CD14-positive monocyte (primary cell): ENCODE measurements at regions of chr17 and their contacts with region 1.

Region 1: DNA sequence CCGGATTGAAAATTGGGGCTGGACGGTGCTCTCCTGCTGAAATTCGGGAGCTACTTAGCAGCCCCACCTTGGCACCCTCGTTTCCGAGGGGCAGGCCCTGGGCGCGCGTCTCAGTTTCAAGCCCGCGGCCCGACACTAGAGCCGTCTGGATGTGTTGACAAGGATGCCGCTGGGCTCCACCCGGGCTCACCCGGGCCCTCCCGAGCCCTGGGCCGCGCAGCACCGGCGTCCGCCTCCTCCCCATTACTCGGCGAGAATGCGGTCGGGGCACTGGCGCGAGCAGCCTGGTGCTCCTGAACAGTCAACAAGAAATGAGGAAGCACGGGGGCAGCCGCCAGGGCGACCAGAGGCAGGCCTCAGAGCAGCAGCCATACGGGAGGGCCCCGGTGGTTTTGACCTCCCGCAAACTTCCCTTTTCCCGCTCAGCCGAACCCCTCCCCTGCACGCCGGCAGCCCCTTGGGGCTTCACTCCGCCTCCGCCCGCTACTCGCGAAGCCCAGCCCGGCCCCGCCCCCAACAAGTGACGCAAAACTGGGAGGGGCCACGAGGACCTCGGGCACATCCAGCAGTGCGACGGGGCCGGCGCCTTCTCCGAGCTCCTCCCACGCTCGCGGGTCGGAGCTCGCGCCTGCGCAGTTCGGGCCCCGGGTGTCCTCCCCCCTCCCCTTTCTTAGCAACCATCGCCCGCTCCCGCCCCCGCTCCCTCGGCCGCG is 447 bp upstream of the SEC14L1 start:
- DNase-seq: peak; percentile 99 to 100 (median 100)
- H3K4me3 ChIP-seq: peak overlapping the region; percentile 26 to 64 (median 26)
- H3K4me3 Mint-ChIP-seq: peak overlapping the region; percentile 56 to 59
- H3K27ac ChIP-seq: peak overlapping the region; percentile 96 to 97
- H3K27ac Mint-ChIP-seq: peak overlapping the region; percentile 90 to 97 (median 95)
- H3K4me1 ChIP-seq: peaks cover 45 to 59% of the 10 kb centered on the region in 2 donors
- H3K4me1 Mint-ChIP-seq: peaks cover 45% of the 10 kb centered on the region
- H3K27me3 ChIP-seq: no peaks in the 10 kb centered on the region
- H3K27me3 Mint-ChIP-seq: peaks cover 0 to 3% (median 1%) of the 10 kb centered on the region in 3 donors
- CTCF ChIP-seq: no peak

Region 2: GRCh38 chr17:77076124-77076872 is 64.0 kb before region 1 on chr17:
- intact Hi-C with region 1: no loop called
- DNase-seq: no peak
- H3K4me3 ChIP-seq: no peak overlapping the region
- H3K4me3 Mint-ChIP-seq: no peak overlapping the region
- H3K27ac ChIP-seq: no peak overlapping the region
- H3K27ac Mint-ChIP-seq: no peak overlapping the region
- H3K4me1 ChIP-seq: no peaks in the 10 kb centered on the region
- H3K4me1 Mint-ChIP-seq: no peaks in the 10 kb centered on the region
- H3K27me3 ChIP-seq: no peaks in the 10 kb centered on the region
- H3K27me3 Mint-ChIP-seq: peaks cover 7 to 15% (median 9%) of the 10 kb centered on the region in 3 donors
- CTCF ChIP-seq: no peak

Region 3: GRCh38 chr17:77096570-77097214 is 43.6 kb before region 1 on chr17:
- intact Hi-C with region 1: loop called (anchors 2 to 5 kb)
- DNase-seq: peak in 2 of 3 donors; percentile 42 to 47
- H3K4me3 ChIP-seq: no peak overlapping the region
- H3K4me3 Mint-ChIP-seq: no peak overlapping the region
- H3K27ac ChIP-seq: peak overlapping the region in 1 of 2 donors; percentile 2
- H3K27ac Mint-ChIP-seq: peak overlapping the region; percentile 48 to 99 (median 74)
- H3K4me1 ChIP-seq: peaks cover 44 to 45% of the 10 kb centered on the region in 2 donors
- H3K4me1 Mint-ChIP-seq: peaks cover 41% of the 10 kb centered on the region
- H3K27me3 ChIP-seq: no peaks in the 10 kb centered on the region
- H3K27me3 Mint-ChIP-seq: no peaks in the 10 kb centered on the region
- CTCF ChIP-seq: peak; percentile 83

Region 4: GRCh38 chr17:77233635-77234334 is 93.5 kb after region 1 on chr17:
- intact Hi-C with region 1: loop called in 1 of 2 experiments (anchors 5 kb)
- DNase-seq: peak; percentile 29 to 76 (median 37)
- H3K4me3 ChIP-seq: no peak overlapping the region
- H3K4me3 Mint-ChIP-seq: no peak overlapping the region
- H3K27ac ChIP-seq: no peak overlapping the region
- H3K27ac Mint-ChIP-seq: peak overlapping the region in 3 of 7 donors; percentile 27 to 68 (median 41)
- H3K4me1 ChIP-seq: peaks cover 10 to 21% of the 10 kb centered on the region in 2 donors
- H3K4me1 Mint-ChIP-seq: peaks cover 27% of the 10 kb centered on the region
- H3K27me3 ChIP-seq: no peaks in the 10 kb centered on the region
- H3K27me3 Mint-ChIP-seq: peaks cover 3 to 9% (median 8%) of the 10 kb centered on the region in 3 donors
- CTCF ChIP-seq: no peak

Region 5: DNA sequence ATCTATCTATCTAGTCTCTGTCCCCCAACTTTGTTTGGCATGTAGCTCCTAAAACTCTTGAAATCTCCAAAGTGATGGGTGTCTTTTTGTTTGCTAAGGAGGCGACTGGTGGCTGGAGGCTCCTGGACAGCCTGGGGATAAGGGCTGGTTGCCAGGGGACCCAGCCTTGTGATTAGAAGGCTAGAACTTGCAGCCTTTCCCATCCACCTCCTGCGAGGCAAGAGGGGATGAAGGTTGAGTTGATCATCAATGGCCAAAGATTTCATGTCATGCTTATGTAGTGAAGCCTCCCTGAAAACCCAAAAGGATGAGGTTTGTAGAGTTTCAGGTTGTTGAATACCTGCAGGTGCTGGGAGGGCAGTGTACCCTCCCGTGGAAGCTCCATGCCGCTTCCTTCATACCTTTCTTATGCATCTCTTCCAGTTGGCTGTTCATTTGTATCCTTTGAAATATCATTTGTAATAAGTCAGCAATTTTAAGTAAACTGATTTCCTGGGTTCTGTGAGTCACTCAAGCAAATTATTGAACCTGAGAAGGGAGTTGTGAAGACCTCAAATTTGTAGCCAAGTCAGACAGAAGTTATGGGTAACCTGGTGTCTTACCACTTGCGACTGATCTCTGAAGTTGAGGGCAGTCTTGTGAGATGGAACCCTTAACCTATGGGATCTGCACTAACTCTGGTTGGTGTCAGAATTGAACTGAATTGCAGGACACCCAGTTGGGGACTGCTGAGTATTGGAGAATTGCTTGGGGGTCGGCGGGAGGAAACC is 202.9 kb after region 1 on chr17:
- intact Hi-C with region 1: no loop called
- DNase-seq: no peak
- H3K4me3 ChIP-seq: peak overlapping the region in 1 of 3 experiments; percentile 46
- H3K4me3 Mint-ChIP-seq: peak overlapping the region in 1 of 2 donors; percentile 76
- H3K27ac ChIP-seq: no peak overlapping the region
- H3K27ac Mint-ChIP-seq: peak overlapping the region in 2 of 7 donors; percentile 31 to 65
- H3K4me1 ChIP-seq: peaks cover 17 to 31% of the 10 kb centered on the region in 2 donors
- H3K4me1 Mint-ChIP-seq: peaks cover 36% of the 10 kb centered on the region
- H3K27me3 ChIP-seq: no peaks in the 10 kb centered on the region
- H3K27me3 Mint-ChIP-seq: no peaks in the 10 kb centered on the region
- CTCF ChIP-seq: no peak

Region 6: GRCh38 chr17:77363821-77364361 is 223.6 kb after region 1 on chr17:
- intact Hi-C with region 1: no loop called
- DNase-seq: peak in 1 of 3 donors; percentile 29
- H3K4me3 ChIP-seq: no peak overlapping the region
- H3K4me3 Mint-ChIP-seq: no peak overlapping the region
- H3K27ac ChIP-seq: no peak overlapping the region
- H3K27ac Mint-ChIP-seq: peak overlapping the region in 1 of 7 donors; percentile 40
- H3K4me1 ChIP-seq: peaks cover 12 to 23% of the 10 kb centered on the region in 2 donors
- H3K4me1 Mint-ChIP-seq: peaks cover 40% of the 10 kb centered on the region
- H3K27me3 ChIP-seq: peaks cover 0 to 9% of the 10 kb centered on the region in 2 donors
- H3K27me3 Mint-ChIP-seq: peaks cover 10 to 16% (median 11%) of the 10 kb centered on the region in 3 donors
- CTCF ChIP-seq: no peak